Sciatic nerve (tissue), 2 donors: ENCODE measurements at regions of chr10 and their contacts with region 1.

Region 1: GRCh38 chr10:77983384-77984341 is 45.7 kb downstream of the POLR3A start:
- DNase-seq: no peak
- ATAC-seq: no peak

Region 2: DNA sequence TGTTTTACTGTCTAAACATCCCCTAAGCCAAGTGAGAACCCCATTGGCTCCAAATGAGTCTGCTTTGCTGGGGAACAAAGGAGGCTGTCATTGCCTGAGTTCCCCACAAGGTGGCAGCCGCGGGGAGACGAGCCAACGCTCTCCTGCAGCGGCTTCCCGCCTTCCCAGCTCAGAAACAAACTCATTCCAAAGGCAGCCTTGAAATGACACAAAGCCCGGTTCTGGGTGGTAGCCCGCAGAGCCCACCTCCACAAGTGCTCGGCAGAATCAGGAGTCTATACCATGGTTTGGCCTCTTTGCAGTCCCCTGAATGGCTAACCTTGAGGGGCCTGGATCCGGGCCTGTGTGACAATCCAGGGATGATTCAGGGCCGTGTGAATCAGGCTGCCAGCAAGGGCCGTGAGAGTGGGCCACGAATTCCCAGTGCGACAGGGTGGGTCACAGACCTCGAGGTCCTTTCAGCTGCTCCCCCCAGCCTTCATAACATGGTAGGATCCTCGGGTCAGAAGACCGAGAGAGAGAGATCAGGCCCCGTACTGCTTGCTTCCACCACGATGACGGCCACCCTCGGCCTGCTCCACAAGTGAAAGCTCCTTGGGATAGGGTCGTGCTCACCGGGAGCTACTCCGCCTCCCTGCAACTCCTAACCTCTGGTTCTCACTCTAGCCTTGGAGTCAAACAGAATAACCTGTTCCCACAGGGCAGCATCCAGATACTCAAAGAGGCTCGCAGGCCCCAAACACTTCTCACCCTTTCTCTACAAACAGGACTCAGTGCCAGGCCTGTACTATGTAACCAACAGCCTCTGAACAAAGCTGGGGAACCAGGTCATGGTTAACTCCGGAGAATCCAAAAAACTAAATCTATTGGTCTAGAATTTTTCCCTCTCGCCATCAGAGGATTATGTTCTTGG is 136.7 kb before region 1 on chr10:
- intact Hi-C with region 1: loop called (anchors 10 kb)
- DNase-seq: peak; percentile 89
- ATAC-seq: peak; percentile 88

Region 3: DNA sequence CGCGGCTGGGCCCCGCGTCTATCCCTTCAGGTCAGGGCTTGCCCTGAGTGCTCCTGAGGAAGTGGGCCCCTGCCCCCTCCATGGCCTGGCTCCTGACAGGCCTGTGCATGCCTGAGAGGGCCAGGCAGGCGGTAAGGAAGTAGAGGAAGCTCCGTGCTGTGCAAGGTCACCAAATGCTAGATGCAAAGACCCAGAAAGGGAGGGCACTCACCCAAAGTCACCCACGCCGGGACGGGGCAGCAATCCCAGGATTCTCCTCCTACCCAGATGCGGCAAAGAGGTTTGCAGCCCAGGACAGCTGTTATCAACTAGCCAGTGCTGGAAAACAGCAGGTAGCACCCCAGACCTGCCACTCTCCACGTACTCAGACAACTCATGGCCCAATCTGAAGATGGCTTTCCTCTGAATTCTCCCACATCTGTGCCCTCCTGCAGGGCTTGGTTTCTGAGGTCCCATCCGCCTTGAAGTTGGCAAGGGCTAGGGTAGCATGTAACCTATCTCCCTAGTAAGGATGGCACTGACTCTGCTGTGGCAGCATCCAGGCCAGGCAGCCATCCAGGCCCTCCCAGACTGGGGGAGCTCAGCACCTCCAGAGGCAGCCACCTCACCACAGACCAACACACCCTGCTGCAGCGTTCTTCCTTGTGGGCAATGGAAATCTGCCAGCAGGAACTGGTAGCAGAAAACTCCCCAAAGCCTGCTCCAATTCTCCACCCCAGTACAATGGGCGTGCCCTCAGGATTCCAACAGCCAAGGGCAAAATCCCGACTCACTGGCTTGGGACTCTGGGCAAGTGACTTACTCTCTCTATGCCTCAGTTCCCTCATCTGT is 84.8 kb before region 1 on chr10:
- intact Hi-C with region 1: loop called (anchors 5 kb)
- DNase-seq: no peak
- ATAC-seq: peak; percentile 72